ENCODE measurements at regions of chr5 and their contacts with region 1.

Region 1: GRCh38 chr5:139403787-139404483 is at the start of gene SPATA24:
- DNase-seq: peak; percentile 99
- H3K4me3 Mint-ChIP-seq: peak within 1 kb of the TSS; percentile 93
- H3K27ac Mint-ChIP-seq: peak within 1 kb of the TSS; percentile 100
- H3K4me1 Mint-ChIP-seq: peaks cover 37% of the 10 kb centered on the region
- H3K27me3 Mint-ChIP-seq: no peaks in the 10 kb centered on the region
- total RNA-seq, gene SPATA24: 6.0 to 7.4 TPM

Region 2: GRCh38 chr5:138542956-138543729 is 860.8 kb before region 1 on chr5 and contains the start of gene ETF1:
- CTCF ChIA-PET with region 1: no interaction called
- intact Hi-C with region 1: loop called (anchors 1 kb)
- DNase-seq: peak; percentile 100
- H3K4me3 Mint-ChIP-seq: peak within 1 kb of the TSS; percentile 100
- H3K27ac Mint-ChIP-seq: peak within 1 kb of the TSS; percentile 100
- H3K4me1 Mint-ChIP-seq: peaks cover 71% of the 10 kb centered on the region
- H3K27me3 Mint-ChIP-seq: no peaks in the 10 kb centered on the region
- total RNA-seq, gene ETF1: 99.8 to 107 TPM

Region 3: GRCh38 chr5:139273572-139274289 is 130.2 kb before region 1 on chr5:
- CTCF ChIA-PET with region 1: no interaction called
- intact Hi-C with region 1: loop called (anchors 1 kb)
- DNase-seq: peak; percentile 91
- H3K4me3 Mint-ChIP-seq: peak overlapping the region; percentile 93
- H3K27ac Mint-ChIP-seq: peak overlapping the region; percentile 80
- H3K4me1 Mint-ChIP-seq: peaks cover 50% of the 10 kb centered on the region
- H3K27me3 Mint-ChIP-seq: no peaks in the 10 kb centered on the region

Region 4: GRCh38 chr5:139392678-139393496 is 11.0 kb before region 1 on chr5:
- CTCF ChIA-PET with region 1: interaction called, 10 read pairs
- intact Hi-C with region 1: loop called (anchors 1 kb)
- DNase-seq: peak; percentile 86
- H3K4me3 Mint-ChIP-seq: peak overlapping the region; percentile 89
- H3K27ac Mint-ChIP-seq: peak overlapping the region; percentile 78
- H3K4me1 Mint-ChIP-seq: peaks cover 39% of the 10 kb centered on the region
- H3K27me3 Mint-ChIP-seq: no peaks in the 10 kb centered on the region

Region 5: GRCh38 chr5:139439013-139439903 is 35.3 kb after region 1 on chr5 and contains the start of gene DNAJC18:
- CTCF ChIA-PET with region 1: no interaction called
- intact Hi-C with region 1: loop called (anchors 1 kb)
- DNase-seq: peak; percentile 94
- H3K4me3 Mint-ChIP-seq: peak within 1 kb of the TSS; percentile 95
- H3K27ac Mint-ChIP-seq: peak within 1 kb of the TSS; percentile 98
- H3K4me1 Mint-ChIP-seq: peaks cover 42% of the 10 kb centered on the region
- H3K27me3 Mint-ChIP-seq: no peaks in the 10 kb centered on the region
- total RNA-seq, gene DNAJC18: 18.1 to 18.8 TPM

Region 6: DNA sequence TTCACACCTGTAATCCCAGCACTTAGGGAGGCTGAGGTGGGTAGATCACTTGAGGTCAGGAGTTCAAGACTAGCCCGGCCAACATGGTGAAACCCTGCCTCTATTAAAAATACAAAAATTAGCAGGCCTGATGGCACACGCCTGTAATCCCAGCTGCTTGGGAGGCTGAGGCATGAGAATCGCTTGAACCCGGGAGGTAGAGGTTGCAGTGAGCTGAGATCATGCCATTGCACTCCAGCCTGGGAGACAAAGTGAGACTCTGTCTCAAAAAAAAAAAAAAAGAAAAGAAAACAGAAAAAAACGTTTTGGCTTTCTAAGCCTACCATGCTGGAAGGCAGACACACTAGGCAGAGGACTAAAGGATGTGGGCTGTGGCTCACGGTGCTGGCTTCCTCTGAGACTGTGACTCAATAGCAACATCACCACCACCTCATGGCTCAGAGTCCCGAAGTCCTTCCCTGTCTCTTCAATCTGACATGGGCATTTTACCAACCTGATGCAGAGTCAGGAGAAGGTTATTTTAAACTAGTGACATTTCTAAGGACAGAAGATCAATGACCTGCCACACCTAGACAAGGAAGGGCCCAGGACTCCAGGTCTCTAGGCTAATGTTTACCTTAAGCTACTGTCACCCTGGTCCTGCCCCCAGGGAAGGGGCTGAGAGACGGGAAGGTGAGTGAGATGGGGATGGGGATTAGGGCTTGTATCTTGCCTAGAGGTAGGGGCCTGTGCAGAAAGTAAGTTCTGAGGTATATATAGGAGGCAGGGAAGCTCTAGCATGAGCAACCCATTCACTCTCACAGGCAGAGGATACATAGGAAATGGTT is 54.9 kb after region 1 on chr5:
- CTCF ChIA-PET with region 1: interaction called, 4 read pairs
- intact Hi-C with region 1: loop called (anchors 2 kb)
- DNase-seq: peak; percentile 93
- H3K4me3 Mint-ChIP-seq: peak overlapping the region; percentile 50
- H3K27ac Mint-ChIP-seq: peak overlapping the region; percentile 94
- H3K4me1 Mint-ChIP-seq: peaks cover 54% of the 10 kb centered on the region
- H3K27me3 Mint-ChIP-seq: no peaks in the 10 kb centered on the region

Measured in activated naive CD4-positive, alpha-beta T cell treated with anti-CD3 and anti-CD28 coated beads for 36 hours (primary cell).